ENCODE measurements at regions of chr3 and their contacts with region 1.

Region 1: GRCh38 chr3:158434412-158435038 is 136.5 kb upstream of the MLF1 start:
- DNase-seq: peak; percentile 50
- ATAC-seq: no peak
- H3K4me3 ChIP-seq: no peak overlapping the region
- H3K4me3 Mint-ChIP-seq: no peak overlapping the region
- H3K27ac ChIP-seq: no peak overlapping the region
- H3K27ac Mint-ChIP-seq: no peak overlapping the region
- H3K4me1 ChIP-seq: no peaks in the 10 kb centered on the region
- H3K4me1 Mint-ChIP-seq: no peaks in the 10 kb centered on the region
- H3K27me3 ChIP-seq: no peaks in the 10 kb centered on the region
- H3K27me3 Mint-ChIP-seq: no peaks in the 10 kb centered on the region
- CTCF ChIP-seq: peak; percentile 71

Region 2: DNA sequence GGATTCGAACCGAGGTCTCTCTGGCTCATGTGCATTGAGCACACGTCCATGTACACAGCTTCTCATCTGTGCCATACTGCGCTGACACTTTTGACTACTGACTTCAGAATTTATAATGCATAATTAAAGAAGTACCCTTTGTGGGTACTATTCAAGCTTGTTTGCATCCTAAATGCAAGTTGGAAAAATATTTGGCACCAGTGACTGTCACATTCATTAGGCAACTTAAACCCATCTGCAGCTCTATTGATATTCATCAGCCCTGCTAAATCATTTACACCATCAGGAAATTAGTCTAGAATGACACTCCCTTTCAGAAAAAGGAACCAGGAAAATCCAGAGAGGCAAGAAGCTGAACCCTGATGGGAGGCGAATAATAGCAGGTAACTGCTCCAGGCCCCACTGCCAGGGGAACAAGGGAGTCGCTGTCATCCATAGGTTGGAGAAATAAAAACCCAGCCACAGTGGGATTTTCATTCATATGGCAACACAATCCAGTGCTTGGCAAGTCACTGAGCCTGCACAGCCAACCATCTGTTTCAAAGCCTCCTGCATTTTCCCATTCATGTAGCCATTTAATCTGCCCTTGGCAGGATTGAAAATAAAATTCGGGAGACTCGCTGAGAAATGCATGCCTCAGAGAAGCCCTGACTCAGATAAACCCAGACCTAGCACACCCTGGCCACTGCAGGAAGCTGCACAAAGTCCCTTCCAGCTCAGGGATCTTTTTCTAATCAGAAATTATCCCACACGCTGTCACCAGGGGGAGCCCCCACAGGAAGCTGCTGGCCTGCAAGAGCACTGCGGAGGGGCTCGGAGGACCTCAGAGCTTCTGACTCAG is 828.3 kb before region 1 on chr3:
- CTCF ChIA-PET with region 1: interaction called, 75 read pairs
- POLR2A ChIA-PET with region 1: no interaction called
- intact Hi-C with region 1: loop called (anchors 1 kb)
- DNase-seq: peak; percentile 56
- ATAC-seq: peak; percentile 66
- H3K4me3 ChIP-seq: no peak overlapping the region
- H3K4me3 Mint-ChIP-seq: no peak overlapping the region
- H3K27ac ChIP-seq: no peak overlapping the region
- H3K27ac Mint-ChIP-seq: no peak overlapping the region
- H3K4me1 ChIP-seq: no peaks in the 10 kb centered on the region
- H3K4me1 Mint-ChIP-seq: peaks cover 3% of the 10 kb centered on the region
- H3K27me3 ChIP-seq: no peaks in the 10 kb centered on the region
- H3K27me3 Mint-ChIP-seq: peaks cover 39% of the 10 kb centered on the region
- CTCF ChIP-seq: peak; percentile 86

Region 3: GRCh38 chr3:157618075-157618760 is 816.3 kb before region 1 on chr3:
- CTCF ChIA-PET with region 1: interaction called, 12 read pairs
- POLR2A ChIA-PET with region 1: no interaction called
- intact Hi-C with region 1: no loop called
- DNase-seq: peak; percentile 62
- ATAC-seq: peak; percentile 84
- H3K4me3 ChIP-seq: no peak overlapping the region
- H3K4me3 Mint-ChIP-seq: no peak overlapping the region
- H3K27ac ChIP-seq: no peak overlapping the region
- H3K27ac Mint-ChIP-seq: no peak overlapping the region
- H3K4me1 ChIP-seq: no peaks in the 10 kb centered on the region
- H3K4me1 Mint-ChIP-seq: peaks cover 4% of the 10 kb centered on the region
- H3K27me3 ChIP-seq: peaks cover 0 to 4% (median 0%) of the 10 kb centered on the region in 4 experiments
- H3K27me3 Mint-ChIP-seq: peaks cover 31% of the 10 kb centered on the region
- CTCF ChIP-seq: peak; percentile 80

Region 4: DNA sequence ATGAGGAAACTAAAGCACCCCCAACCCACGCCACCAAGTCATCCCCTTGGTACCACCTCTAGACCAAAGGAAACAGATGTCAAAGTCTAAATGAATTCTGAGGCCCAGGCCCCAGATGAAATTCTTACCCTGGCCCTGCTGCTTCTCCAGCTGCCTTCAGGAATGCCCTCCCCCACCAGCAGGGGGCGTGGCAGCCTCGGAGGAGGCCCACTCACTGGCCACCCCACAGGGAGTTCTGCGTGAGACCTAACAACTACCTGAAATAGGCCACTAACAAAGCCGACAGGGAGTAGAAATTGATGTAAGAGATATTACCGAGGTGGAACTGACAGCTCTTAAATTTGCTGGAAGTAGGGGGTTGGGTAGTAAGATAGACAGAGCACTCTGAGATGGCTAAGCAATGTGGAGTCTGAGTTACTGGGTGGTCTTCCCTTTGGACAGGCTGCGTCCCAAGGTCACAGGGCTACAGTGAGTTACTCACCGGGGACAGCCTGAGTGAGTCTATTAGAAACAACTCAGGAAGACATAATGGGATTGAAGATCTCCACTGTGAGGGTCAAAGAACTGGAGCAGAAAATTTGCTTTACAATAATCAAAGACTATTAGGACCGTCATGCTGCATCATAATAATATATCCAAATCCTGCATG is 569.0 kb before region 1 on chr3:
- CTCF ChIA-PET with region 1: interaction called, 11 read pairs
- POLR2A ChIA-PET with region 1: no interaction called
- intact Hi-C with region 1: no loop called
- DNase-seq: peak; percentile 17
- ATAC-seq: no peak
- H3K4me3 ChIP-seq: no peak overlapping the region
- H3K4me3 Mint-ChIP-seq: no peak overlapping the region
- H3K27ac ChIP-seq: no peak overlapping the region
- H3K27ac Mint-ChIP-seq: no peak overlapping the region
- H3K4me1 ChIP-seq: no peaks in the 10 kb centered on the region
- H3K4me1 Mint-ChIP-seq: no peaks in the 10 kb centered on the region
- H3K27me3 ChIP-seq: no peaks in the 10 kb centered on the region
- H3K27me3 Mint-ChIP-seq: no peaks in the 10 kb centered on the region
- CTCF ChIP-seq: peak; percentile 50

Region 5: GRCh38 chr3:158005391-158006100 is 429.0 kb before region 1 on chr3:
- CTCF ChIA-PET with region 1: no interaction called
- POLR2A ChIA-PET with region 1: no interaction called
- intact Hi-C with region 1: no loop called
- DNase-seq: no peak
- ATAC-seq: no peak
- H3K4me3 ChIP-seq: no peak overlapping the region
- H3K4me3 Mint-ChIP-seq: no peak overlapping the region
- H3K27ac ChIP-seq: no peak overlapping the region
- H3K27ac Mint-ChIP-seq: no peak overlapping the region
- H3K4me1 ChIP-seq: no peaks in the 10 kb centered on the region
- H3K4me1 Mint-ChIP-seq: no peaks in the 10 kb centered on the region
- H3K27me3 ChIP-seq: no peaks in the 10 kb centered on the region
- H3K27me3 Mint-ChIP-seq: no peaks in the 10 kb centered on the region
- CTCF ChIP-seq: no peak

Region 6: DNA sequence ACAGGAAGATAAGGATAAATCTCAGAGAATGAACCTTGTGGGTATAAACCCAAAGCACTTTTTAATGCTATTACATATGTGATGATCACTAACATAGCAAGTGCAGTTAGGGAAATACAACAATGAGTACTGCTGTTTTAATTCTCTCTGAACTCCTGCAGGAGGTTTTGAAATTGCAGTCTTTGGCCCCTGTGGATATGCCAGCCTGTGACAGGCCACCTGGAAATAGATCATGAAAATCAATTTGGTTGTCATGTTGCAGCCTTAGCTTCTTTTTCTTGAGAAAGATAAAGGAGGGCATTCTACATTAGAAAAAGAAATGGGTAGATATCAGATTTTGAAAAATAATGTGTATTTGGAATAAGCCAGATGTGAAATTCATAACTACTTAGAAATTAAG is 221.1 kb before region 1 on chr3:
- CTCF ChIA-PET with region 1: no interaction called
- POLR2A ChIA-PET with region 1: no interaction called
- intact Hi-C with region 1: no loop called
- DNase-seq: no peak
- ATAC-seq: no peak
- H3K4me3 ChIP-seq: no peak overlapping the region
- H3K4me3 Mint-ChIP-seq: no peak overlapping the region
- H3K27ac ChIP-seq: no peak overlapping the region
- H3K27ac Mint-ChIP-seq: no peak overlapping the region
- H3K4me1 ChIP-seq: no peaks in the 10 kb centered on the region
- H3K4me1 Mint-ChIP-seq: no peaks in the 10 kb centered on the region
- H3K27me3 ChIP-seq: no peaks in the 10 kb centered on the region
- H3K27me3 Mint-ChIP-seq: no peaks in the 10 kb centered on the region
- CTCF ChIP-seq: no peak

Region 7: DNA sequence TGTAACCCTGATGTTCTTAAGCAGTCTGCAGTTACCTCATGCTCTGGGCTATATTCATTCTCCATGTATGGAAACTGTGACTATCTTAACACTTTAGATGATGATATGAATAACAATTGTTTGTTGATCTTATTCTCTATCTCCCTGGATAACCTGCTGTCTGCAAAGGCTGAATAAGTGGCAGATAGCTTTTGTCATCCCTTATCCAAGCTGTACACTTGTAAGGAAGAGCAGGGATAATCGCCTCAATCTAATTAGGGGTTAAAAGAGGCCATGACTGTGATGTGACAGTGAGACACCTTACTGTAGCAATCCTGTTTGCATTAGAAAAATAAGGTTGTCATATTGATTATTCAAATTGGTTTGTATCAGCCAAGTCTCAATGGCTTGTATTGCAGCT is 200.7 kb before region 1 on chr3:
- CTCF ChIA-PET with region 1: no interaction called
- POLR2A ChIA-PET with region 1: no interaction called
- intact Hi-C with region 1: no loop called
- DNase-seq: no peak
- ATAC-seq: no peak
- H3K4me3 ChIP-seq: no peak overlapping the region
- H3K4me3 Mint-ChIP-seq: no peak overlapping the region
- H3K27ac ChIP-seq: no peak overlapping the region
- H3K27ac Mint-ChIP-seq: no peak overlapping the region
- H3K4me1 ChIP-seq: no peaks in the 10 kb centered on the region
- H3K4me1 Mint-ChIP-seq: no peaks in the 10 kb centered on the region
- H3K27me3 ChIP-seq: no peaks in the 10 kb centered on the region
- H3K27me3 Mint-ChIP-seq: no peaks in the 10 kb centered on the region
- CTCF ChIP-seq: no peak

Region 8: DNA sequence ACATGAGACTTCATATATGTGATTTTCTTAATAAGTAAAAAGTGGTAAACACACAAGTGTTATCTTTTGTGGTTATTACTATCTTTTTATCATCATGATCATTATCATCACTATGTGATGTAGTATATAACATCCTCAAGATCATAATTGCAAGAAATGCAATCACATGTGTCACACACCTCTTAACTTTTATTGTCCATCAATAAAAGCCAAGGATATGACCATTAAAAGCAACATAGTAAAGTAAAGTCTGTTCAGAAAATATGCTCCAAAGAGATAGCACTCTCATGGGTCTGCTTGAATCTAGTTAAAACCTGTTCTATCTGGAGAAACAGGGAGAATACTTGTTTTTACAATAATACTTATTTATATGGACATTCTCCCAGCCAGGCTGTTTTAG is 16.5 kb before region 1 on chr3:
- CTCF ChIA-PET with region 1: interaction called, 10 read pairs
- POLR2A ChIA-PET with region 1: no interaction called
- intact Hi-C with region 1: no loop called
- DNase-seq: no peak
- ATAC-seq: no peak
- H3K4me3 ChIP-seq: no peak overlapping the region
- H3K4me3 Mint-ChIP-seq: no peak overlapping the region
- H3K27ac ChIP-seq: no peak overlapping the region
- H3K27ac Mint-ChIP-seq: no peak overlapping the region
- H3K4me1 ChIP-seq: no peaks in the 10 kb centered on the region
- H3K4me1 Mint-ChIP-seq: peaks cover 3% of the 10 kb centered on the region
- H3K27me3 ChIP-seq: no peaks in the 10 kb centered on the region
- H3K27me3 Mint-ChIP-seq: no peaks in the 10 kb centered on the region
- CTCF ChIP-seq: no peak